Dendritic cell treated with granulocyte-macrophage colony-stimulating factor and Interleukin-4, amounts not matched to agents 40 ng/mL and 50 ng/mL, for 4 days (primary cell): ENCODE measurements at regions of chr2 and their contacts with region 1.

Region 1: GRCh38 chr2:161122772-161123530 is 37.3 kb upstream of the TANK start:
- H3K4me3 Mint-ChIP-seq: no peak overlapping the region
- H3K27ac Mint-ChIP-seq: peak overlapping the region; percentile 57
- H3K4me1 Mint-ChIP-seq: peaks cover 18% of the 10 kb centered on the region
- H3K27me3 Mint-ChIP-seq: no peaks in the 10 kb centered on the region

Region 2: GRCh38 chr2:160974803-160975202 is 148.1 kb before region 1 on chr2:
- intact Hi-C with region 1: no loop called
- H3K4me3 Mint-ChIP-seq: no peak overlapping the region
- H3K27ac Mint-ChIP-seq: no peak overlapping the region
- H3K4me1 Mint-ChIP-seq: no peaks in the 10 kb centered on the region
- H3K27me3 Mint-ChIP-seq: no peaks in the 10 kb centered on the region

Region 3: GRCh38 chr2:161088658-161089350 is 34.1 kb before region 1 on chr2:
- intact Hi-C with region 1: loop called (anchors 5 kb)
- H3K4me3 Mint-ChIP-seq: no peak overlapping the region
- H3K27ac Mint-ChIP-seq: peak overlapping the region; percentile 56
- H3K4me1 Mint-ChIP-seq: peaks cover 15% of the 10 kb centered on the region
- H3K27me3 Mint-ChIP-seq: no peaks in the 10 kb centered on the region

Region 4: GRCh38 chr2:161370981-161371380 is 248.0 kb after region 1 on chr2:
- intact Hi-C with region 1: no loop called
- H3K4me3 Mint-ChIP-seq: no peak overlapping the region
- H3K27ac Mint-ChIP-seq: no peak overlapping the region
- H3K4me1 Mint-ChIP-seq: no peaks in the 10 kb centered on the region
- H3K27me3 Mint-ChIP-seq: no peaks in the 10 kb centered on the region